ENCODE measurements at regions of chr18 and their contacts with region 1.

Region 1: GRCh38 chr18:3245853-3246634 is 1.6 kb upstream of the MYL12A start:
- DNase-seq: peak; percentile 89
- H3K4me3 Mint-ChIP-seq: peak overlapping the region; percentile 79
- H3K27ac Mint-ChIP-seq: peak overlapping the region; percentile 83
- H3K4me1 Mint-ChIP-seq: peaks cover 30% of the 10 kb centered on the region
- H3K27me3 Mint-ChIP-seq: no peaks in the 10 kb centered on the region
- CTCF ChIP-seq: peak; percentile 96

Region 2: GRCh38 chr18:2958819-2959298 is 287.2 kb before region 1 on chr18:
- CTCF ChIA-PET with region 1: no interaction called
- intact Hi-C with region 1: no loop called
- DNase-seq: no peak
- H3K4me3 Mint-ChIP-seq: no peak overlapping the region
- H3K27ac Mint-ChIP-seq: no peak overlapping the region
- H3K4me1 Mint-ChIP-seq: no peaks in the 10 kb centered on the region
- H3K27me3 Mint-ChIP-seq: no peaks in the 10 kb centered on the region
- CTCF ChIP-seq: no peak

Region 3: DNA sequence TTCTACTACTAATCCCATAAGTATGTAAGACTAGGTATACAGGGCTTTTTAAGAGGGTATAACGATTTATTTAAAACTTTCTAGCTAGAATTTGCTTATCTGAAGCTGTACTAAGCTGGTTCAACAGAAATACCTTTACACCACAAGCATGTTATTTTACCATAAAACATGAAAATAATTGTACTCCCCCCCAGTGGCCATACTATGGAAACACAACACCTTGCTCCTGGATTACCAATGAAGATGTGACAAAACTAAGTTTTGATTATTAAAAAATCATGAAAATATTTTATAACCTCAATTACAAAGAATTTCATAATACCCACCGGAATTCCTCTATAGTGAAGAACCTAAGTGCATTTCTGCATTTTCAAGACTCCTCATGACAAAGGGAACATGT is 260.4 kb before region 1 on chr18:
- CTCF ChIA-PET with region 1: interaction called, 10 read pairs
- intact Hi-C with region 1: loop called (anchors 5 kb)
- DNase-seq: peak; percentile 34
- H3K4me3 Mint-ChIP-seq: no peak overlapping the region
- H3K27ac Mint-ChIP-seq: no peak overlapping the region
- H3K4me1 Mint-ChIP-seq: peaks cover 52% of the 10 kb centered on the region
- H3K27me3 Mint-ChIP-seq: no peaks in the 10 kb centered on the region
- CTCF ChIP-seq: peak; percentile 33

Region 4: DNA sequence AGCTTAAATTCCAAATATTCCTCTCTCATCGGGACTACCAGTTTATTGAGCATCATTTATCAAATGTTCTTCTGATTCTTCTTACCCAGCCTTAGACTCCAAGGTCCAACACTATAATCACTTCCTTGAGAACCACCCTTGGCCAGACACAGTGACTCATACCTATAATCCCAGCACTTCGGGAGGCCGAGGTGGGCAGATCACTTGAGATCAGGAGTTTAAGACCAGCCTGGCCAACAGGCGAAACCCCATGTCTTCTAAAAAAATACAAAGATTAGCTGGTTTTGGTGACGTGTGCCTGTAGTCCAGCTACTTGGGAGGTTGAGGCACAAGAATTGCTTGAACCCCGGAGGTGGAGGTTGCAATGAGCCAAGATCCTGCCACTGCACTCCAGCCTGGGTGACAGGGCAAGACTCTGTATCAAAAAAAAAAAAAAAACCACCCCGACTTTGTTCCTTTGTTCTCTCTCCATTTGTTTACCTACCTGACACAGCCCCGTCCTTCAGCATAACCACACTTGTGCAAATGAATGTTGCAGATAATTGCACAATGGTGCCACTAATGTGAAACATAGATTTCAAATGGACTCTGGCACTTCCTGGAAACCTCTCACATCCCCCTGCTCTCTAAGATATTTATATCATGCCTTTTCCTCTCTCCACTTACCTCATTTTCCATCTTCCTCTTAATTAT is 194.2 kb before region 1 on chr18:
- CTCF ChIA-PET with region 1: no interaction called
- intact Hi-C with region 1: loop called (anchors 10 kb)
- DNase-seq: peak; percentile 67
- H3K4me3 Mint-ChIP-seq: peak overlapping the region; percentile 47
- H3K27ac Mint-ChIP-seq: peak overlapping the region; percentile 90
- H3K4me1 Mint-ChIP-seq: peaks cover 47% of the 10 kb centered on the region
- H3K27me3 Mint-ChIP-seq: no peaks in the 10 kb centered on the region
- CTCF ChIP-seq: no peak

Region 5: GRCh38 chr18:3110034-3110752 is 135.9 kb before region 1 on chr18:
- CTCF ChIA-PET with region 1: no interaction called
- intact Hi-C with region 1: no loop called
- DNase-seq: no peak
- H3K4me3 Mint-ChIP-seq: no peak overlapping the region
- H3K27ac Mint-ChIP-seq: no peak overlapping the region
- H3K4me1 Mint-ChIP-seq: peaks cover 8% of the 10 kb centered on the region
- H3K27me3 Mint-ChIP-seq: no peaks in the 10 kb centered on the region
- CTCF ChIP-seq: no peak

Region 6: GRCh38 chr18:3151399-3152264 is 94.4 kb before region 1 on chr18:
- CTCF ChIA-PET with region 1: interaction called, 20 read pairs
- intact Hi-C with region 1: loop called (anchors 1 kb)
- DNase-seq: no peak
- H3K4me3 Mint-ChIP-seq: no peak overlapping the region
- H3K27ac Mint-ChIP-seq: peak overlapping the region; percentile 52
- H3K4me1 Mint-ChIP-seq: peaks cover 46% of the 10 kb centered on the region
- H3K27me3 Mint-ChIP-seq: no peaks in the 10 kb centered on the region
- CTCF ChIP-seq: peak; percentile 51

Region 7: GRCh38 chr18:3186678-3187658 is 59.1 kb before region 1 on chr18:
- CTCF ChIA-PET with region 1: interaction called, 3 read pairs
- intact Hi-C with region 1: loop called (anchors 5 kb)
- DNase-seq: peak; percentile 13
- H3K4me3 Mint-ChIP-seq: no peak overlapping the region
- H3K27ac Mint-ChIP-seq: no peak overlapping the region
- H3K4me1 Mint-ChIP-seq: peaks cover 9% of the 10 kb centered on the region
- H3K27me3 Mint-ChIP-seq: no peaks in the 10 kb centered on the region
- CTCF ChIP-seq: no peak